ENCODE measurements at regions of chr2 and their contacts with region 1.

Region 1: GRCh38 chr2:230847883-230848388 is 16.8 kb upstream of the ITM2C start:
- DNase-seq: peak; percentile 76
- H3K4me3 Mint-ChIP-seq: no peak overlapping the region
- H3K27ac Mint-ChIP-seq: no peak overlapping the region
- H3K4me1 Mint-ChIP-seq: peaks cover 10% of the 10 kb centered on the region
- H3K27me3 Mint-ChIP-seq: peaks cover 53% of the 10 kb centered on the region

Region 2: GRCh38 chr2:230400454-230400853 is 447.5 kb before region 1 on chr2:
- intact Hi-C with region 1: no loop called
- DNase-seq: no peak
- H3K4me3 Mint-ChIP-seq: no peak overlapping the region
- H3K27ac Mint-ChIP-seq: no peak overlapping the region
- H3K4me1 Mint-ChIP-seq: no peaks in the 10 kb centered on the region
- H3K27me3 Mint-ChIP-seq: no peaks in the 10 kb centered on the region

Region 3: GRCh38 chr2:230824406-230824978 is 23.4 kb before region 1 on chr2:
- intact Hi-C with region 1: loop called (anchors 1 kb)
- DNase-seq: peak; percentile 38
- H3K4me3 Mint-ChIP-seq: no peak overlapping the region
- H3K27ac Mint-ChIP-seq: no peak overlapping the region
- H3K4me1 Mint-ChIP-seq: peaks cover 16% of the 10 kb centered on the region
- H3K27me3 Mint-ChIP-seq: peaks cover 29% of the 10 kb centered on the region

Region 4: DNA sequence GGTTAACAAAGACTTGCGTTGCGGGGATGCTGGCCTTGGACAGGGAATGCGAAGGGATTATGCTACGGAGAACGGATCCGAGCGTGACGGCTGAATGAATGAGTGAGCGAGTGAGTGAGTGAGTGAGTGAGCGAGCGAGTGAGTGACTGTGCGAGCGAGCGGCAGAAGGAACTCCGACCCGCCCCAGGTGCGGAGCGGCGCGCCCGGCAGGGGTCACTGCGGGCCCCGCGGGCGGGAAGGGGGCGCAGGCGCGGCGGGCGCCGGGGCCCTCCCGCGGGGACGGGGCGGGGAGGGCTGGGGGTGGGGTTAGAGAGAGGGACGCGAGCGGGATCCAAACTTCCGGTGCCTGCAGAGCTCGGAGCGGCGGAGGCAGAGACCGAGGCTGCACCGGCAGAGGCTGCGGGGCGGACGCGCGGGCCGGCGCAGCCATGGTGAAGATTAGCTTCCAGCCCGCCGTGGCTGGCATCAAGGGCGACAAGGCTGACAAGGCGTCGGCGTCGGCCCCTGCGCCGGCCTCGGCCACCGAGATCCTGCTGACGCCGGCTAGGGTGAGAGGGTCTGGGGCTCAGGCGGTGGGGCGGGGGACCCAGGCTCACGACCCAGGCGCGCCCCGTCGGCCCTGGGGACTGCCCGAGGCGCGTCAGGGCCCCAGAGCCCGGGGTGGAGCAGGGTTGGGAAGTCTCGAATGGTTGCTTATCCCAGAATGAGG is 16.8 kb after region 1 on chr2 and contains the start of gene ITM2C:
- intact Hi-C with region 1: loop called (anchors 2 kb)
- DNase-seq: peak; percentile 65
- H3K4me3 Mint-ChIP-seq: peak within 1 kb of the TSS; percentile 86
- H3K27ac Mint-ChIP-seq: no peak within 1 kb of the TSS
- H3K4me1 Mint-ChIP-seq: peaks cover 22% of the 10 kb centered on the region
- H3K27me3 Mint-ChIP-seq: peaks cover 47% of the 10 kb centered on the region
- total RNA-seq, gene ITM2C: 13.3 and 15.8 TPM in 2 replicates

Region 5: GRCh38 chr2:230893841-230894781 is 46.2 kb after region 1 on chr2:
- intact Hi-C with region 1: no loop called
- DNase-seq: no peak
- H3K4me3 Mint-ChIP-seq: no peak overlapping the region
- H3K27ac Mint-ChIP-seq: no peak overlapping the region
- H3K4me1 Mint-ChIP-seq: peaks cover 8% of the 10 kb centered on the region
- H3K27me3 Mint-ChIP-seq: peaks cover 37% of the 10 kb centered on the region

Region 6: DNA sequence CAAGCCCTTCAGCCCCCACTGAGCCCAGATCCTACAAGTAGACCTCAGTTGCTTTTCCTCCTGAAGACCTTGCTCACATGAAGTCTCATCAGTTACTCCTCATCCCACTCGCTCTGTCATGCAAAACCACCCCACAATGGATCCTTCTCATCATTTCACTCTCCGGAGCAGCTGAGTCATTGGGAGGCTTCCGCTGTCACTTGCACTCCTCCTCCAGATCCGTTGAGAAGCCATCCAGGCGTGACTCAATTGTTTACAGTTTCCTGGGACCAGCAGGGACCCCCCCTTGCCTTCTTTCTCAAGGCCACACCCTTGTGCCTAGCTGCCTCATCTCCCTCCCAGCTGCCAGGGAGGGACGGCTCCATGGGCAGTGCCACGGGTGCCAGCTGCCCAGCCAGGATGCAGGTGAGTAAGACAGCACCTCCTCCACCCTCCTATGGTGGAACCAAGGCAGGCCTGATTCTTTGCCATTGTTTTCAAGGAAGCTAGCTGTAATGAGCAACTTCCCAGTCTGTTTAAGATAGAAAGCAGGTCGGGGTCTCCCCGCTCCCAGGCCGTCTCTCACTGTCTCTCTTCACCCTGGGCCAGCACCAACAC is 60.8 kb after region 1 on chr2:
- intact Hi-C with region 1: loop called (anchors 5 kb)
- DNase-seq: no peak
- H3K4me3 Mint-ChIP-seq: peak overlapping the region; percentile 74
- H3K27ac Mint-ChIP-seq: peak overlapping the region; percentile 75
- H3K4me1 Mint-ChIP-seq: peaks cover 54% of the 10 kb centered on the region
- H3K27me3 Mint-ChIP-seq: peaks cover 39% of the 10 kb centered on the region

Region 7: DNA sequence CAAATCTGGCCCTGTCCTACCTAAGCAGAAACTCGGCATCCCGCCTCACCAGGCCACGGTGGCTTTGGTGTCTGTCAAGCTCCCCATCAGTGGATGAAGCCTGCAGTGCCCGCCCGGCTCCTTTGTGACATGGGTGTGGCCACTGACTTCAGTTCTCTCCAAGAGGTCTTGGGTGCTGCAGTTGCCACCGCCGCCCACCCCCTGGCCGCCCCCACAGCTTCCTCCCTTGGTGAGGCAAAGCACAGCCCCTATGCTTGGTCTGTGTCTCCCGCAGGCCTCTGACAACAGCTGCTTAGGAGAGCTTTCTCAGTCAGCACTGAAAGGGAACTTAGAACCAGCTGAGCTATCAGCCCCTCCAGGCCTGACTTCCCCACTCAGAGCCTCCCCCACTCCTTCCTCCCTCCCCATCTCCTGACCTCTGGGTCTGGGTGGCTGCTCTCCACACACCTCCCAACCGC is 100.0 kb after region 1 on chr2:
- intact Hi-C with region 1: no loop called
- DNase-seq: no peak
- H3K4me3 Mint-ChIP-seq: no peak overlapping the region
- H3K27ac Mint-ChIP-seq: no peak overlapping the region
- H3K4me1 Mint-ChIP-seq: peaks cover 22% of the 10 kb centered on the region
- H3K27me3 Mint-ChIP-seq: peaks cover 19% of the 10 kb centered on the region

Region 8: DNA sequence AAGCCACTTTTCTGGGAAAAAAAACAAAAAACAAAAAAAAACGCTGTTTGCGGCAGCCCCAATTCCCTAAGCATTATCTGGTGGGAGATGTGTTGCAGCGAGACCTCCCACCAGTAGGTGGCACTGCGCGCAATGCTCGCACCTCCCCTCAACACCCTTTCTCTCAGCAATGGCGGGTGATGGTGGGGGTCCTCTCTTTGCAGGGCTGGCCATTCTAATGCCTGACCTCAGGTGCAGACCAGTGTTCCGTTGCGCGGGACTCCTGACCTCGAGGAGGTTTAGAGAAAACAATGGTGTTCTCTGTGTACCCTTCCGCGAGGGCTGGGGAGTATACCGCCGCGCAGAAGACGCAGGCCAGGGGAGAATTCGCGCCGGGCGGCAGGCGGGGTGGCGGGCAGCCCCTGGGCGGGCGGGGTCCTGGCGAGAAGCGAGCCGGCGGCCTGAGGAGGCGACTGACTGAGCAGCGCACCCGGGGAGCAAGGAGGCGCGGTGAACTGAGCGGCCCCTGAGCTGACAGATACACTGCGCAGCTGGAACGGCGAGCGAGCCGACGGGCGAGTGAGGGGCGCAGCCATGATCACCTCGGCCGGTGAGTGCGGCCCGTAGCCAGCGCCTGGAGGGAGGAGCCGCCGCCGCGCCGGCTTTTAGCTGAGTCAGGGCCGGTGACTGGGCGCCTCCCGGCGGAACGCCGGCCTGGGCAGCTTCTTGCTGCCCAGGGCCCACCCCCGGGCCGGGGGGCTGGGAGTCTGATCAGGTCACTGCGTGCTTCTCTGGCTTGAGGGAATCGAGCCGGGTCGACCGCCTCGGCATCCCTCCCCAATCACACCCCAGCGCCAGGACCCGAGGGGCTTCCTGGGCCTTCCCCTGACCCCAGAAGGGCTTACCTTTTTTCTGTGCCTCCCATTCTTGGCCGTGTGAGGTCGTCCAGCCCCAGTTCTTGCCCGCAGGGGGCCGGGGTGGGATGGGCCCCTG is 208.8 kb after region 1 on chr2 and contains the start of gene PSMD1:
- intact Hi-C with region 1: loop called (anchors 5 kb)
- DNase-seq: peak; percentile 91
- H3K4me3 Mint-ChIP-seq: peak within 1 kb of the TSS; percentile 97
- H3K27ac Mint-ChIP-seq: peak within 1 kb of the TSS; percentile 100
- H3K4me1 Mint-ChIP-seq: peaks cover 48% of the 10 kb centered on the region
- H3K27me3 Mint-ChIP-seq: peaks cover 2% of the 10 kb centered on the region
- total RNA-seq, gene PSMD1: 180 and 194 TPM in 2 replicates

Measured in activated T-helper 2 cell treated with anti-CD3 and anti-CD28 coated beads, Interferon-gamma antibody, Interleukin-2, Interleukin-4, amounts not matched to agents 10 μg/mL and 5 μg/mL and 100 μg/mL, durations not matched to agents 14 hours and 24 hours and 36 hours (primary cell).